MCF 10A (cell line): ENCODE measurements at regions of chr7 and their contacts with region 1.

Region 1: GRCh38 chr7:143214789-143215679 is 6.8 kb upstream of the TAS2R40 start:
- DNase-seq: peak; percentile 89
- H3K4me3 Mint-ChIP-seq: no peak overlapping the region
- H3K27ac Mint-ChIP-seq: no peak overlapping the region
- H3K4me1 Mint-ChIP-seq: no peaks in the 10 kb centered on the region
- H3K27me3 Mint-ChIP-seq: peaks cover 25% of the 10 kb centered on the region
- CTCF ChIP-seq: peak; percentile 99

Region 2: GRCh38 chr7:142873281-142873787 is 341.7 kb before region 1 on chr7:
- CTCF ChIA-PET with region 1: interaction called, 10 read pairs
- POLR2A ChIA-PET with region 1: no interaction called
- intact Hi-C with region 1: no loop called
- DNase-seq: no peak
- H3K4me3 Mint-ChIP-seq: no peak overlapping the region
- H3K27ac Mint-ChIP-seq: no peak overlapping the region
- H3K4me1 Mint-ChIP-seq: no peaks in the 10 kb centered on the region
- H3K27me3 Mint-ChIP-seq: peaks cover 29% of the 10 kb centered on the region
- CTCF ChIP-seq: peak; percentile 24

Region 3: GRCh38 chr7:142898377-142899170 is 316.5 kb before region 1 on chr7:
- CTCF ChIA-PET with region 1: interaction called, 14 read pairs
- POLR2A ChIA-PET with region 1: no interaction called
- intact Hi-C with region 1: no loop called
- DNase-seq: peak; percentile 62
- H3K4me3 Mint-ChIP-seq: no peak overlapping the region
- H3K27ac Mint-ChIP-seq: no peak overlapping the region
- H3K4me1 Mint-ChIP-seq: no peaks in the 10 kb centered on the region
- H3K27me3 Mint-ChIP-seq: peaks cover 76% of the 10 kb centered on the region
- CTCF ChIP-seq: no peak

Region 4: GRCh38 chr7:142992464-142992863 is 222.6 kb before region 1 on chr7:
- CTCF ChIA-PET with region 1: interaction called, 10 read pairs
- POLR2A ChIA-PET with region 1: no interaction called
- intact Hi-C with region 1: no loop called
- DNase-seq: no peak
- H3K4me3 Mint-ChIP-seq: no peak overlapping the region
- H3K27ac Mint-ChIP-seq: no peak overlapping the region
- H3K4me1 Mint-ChIP-seq: no peaks in the 10 kb centered on the region
- H3K27me3 Mint-ChIP-seq: peaks cover 39% of the 10 kb centered on the region
- CTCF ChIP-seq: no peak

Region 5: GRCh38 chr7:143147072-143147694 is 67.9 kb before region 1 on chr7:
- CTCF ChIA-PET with region 1: no interaction called
- POLR2A ChIA-PET with region 1: no interaction called
- intact Hi-C with region 1: no loop called
- DNase-seq: no peak
- H3K4me3 Mint-ChIP-seq: no peak overlapping the region
- H3K27ac Mint-ChIP-seq: no peak overlapping the region
- H3K4me1 Mint-ChIP-seq: no peaks in the 10 kb centered on the region
- H3K27me3 Mint-ChIP-seq: no peaks in the 10 kb centered on the region
- CTCF ChIP-seq: no peak

Region 6: GRCh38 chr7:143203386-143203785 is 11.6 kb before region 1 on chr7:
- CTCF ChIA-PET with region 1: interaction called, 27 read pairs
- POLR2A ChIA-PET with region 1: interaction called, 4 read pairs
- intact Hi-C with region 1: no loop called
- DNase-seq: no peak
- H3K4me3 Mint-ChIP-seq: no peak overlapping the region
- H3K27ac Mint-ChIP-seq: no peak overlapping the region
- H3K4me1 Mint-ChIP-seq: peaks cover 5% of the 10 kb centered on the region
- H3K27me3 Mint-ChIP-seq: peaks cover 29% of the 10 kb centered on the region
- CTCF ChIP-seq: no peak

Region 7: GRCh38 chr7:144854839-144855424 is 1639.9 kb after region 1 on chr7:
- CTCF ChIA-PET with region 1: no interaction called
- POLR2A ChIA-PET with region 1: no interaction called
- intact Hi-C with region 1: no loop called
- DNase-seq: peak; percentile 60
- H3K4me3 Mint-ChIP-seq: no peak overlapping the region
- H3K27ac Mint-ChIP-seq: no peak overlapping the region
- H3K4me1 Mint-ChIP-seq: peaks cover 11% of the 10 kb centered on the region
- H3K27me3 Mint-ChIP-seq: no peaks in the 10 kb centered on the region
- CTCF ChIP-seq: peak; percentile 59